ENCODE measurements at regions of chr5 and their contacts with region 1.

Region 1: DNA sequence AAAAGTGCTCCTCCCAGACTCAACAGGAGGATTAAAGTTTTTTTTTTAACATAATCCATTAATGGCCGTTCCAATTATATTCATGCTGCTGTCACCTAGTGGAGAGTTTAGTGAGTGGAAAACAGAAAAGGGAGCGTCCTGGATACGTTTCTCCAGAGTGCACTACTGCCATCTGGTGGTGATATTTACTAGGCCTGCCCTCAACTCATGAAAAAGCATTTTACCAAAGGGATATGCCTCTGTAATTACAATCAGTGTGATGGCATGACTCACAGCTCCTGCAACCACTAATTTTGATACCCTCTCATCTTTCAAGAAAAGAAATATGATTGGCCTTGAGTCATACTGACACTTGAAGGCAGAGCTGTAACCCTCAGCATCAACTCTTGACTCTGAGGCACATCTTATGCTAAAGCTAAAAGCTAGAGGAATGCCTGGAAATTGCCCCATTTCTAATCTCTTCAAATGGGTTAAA is 20.0 kb downstream of the MINAR2 start:
- DNase-seq: peak in 8 of 9 donors; percentile 14 to 60 (median 50)
- ATAC-seq: peak; percentile 86
- H3K4me3 ChIP-seq: no peak overlapping the region
- H3K4me3 Mint-ChIP-seq: no peak overlapping the region
- H3K27ac ChIP-seq: no peak overlapping the region
- H3K27ac Mint-ChIP-seq: no peak overlapping the region
- H3K4me1 ChIP-seq: no peaks in the 10 kb centered on the region
- H3K4me1 Mint-ChIP-seq: peaks cover 0 to 4% (median 0%) of the 10 kb centered on the region in 7 donors
- H3K27me3 ChIP-seq: no peaks in the 10 kb centered on the region
- H3K27me3 Mint-ChIP-seq: no peaks in the 10 kb centered on the region

Region 2: GRCh38 chr5:128905571-128906110 is 862.3 kb before region 1 on chr5:
- CTCF ChIA-PET with region 1: interaction called, 3 read pairs
- POLR2A ChIA-PET with region 1: no interaction called
- intact Hi-C with region 1: loop called in 1 of 2 experiments (anchors 1 kb)
- DNase-seq: peak in 7 of 9 donors; percentile 3 to 47 (median 42)
- ATAC-seq: peak; percentile 76
- H3K4me3 ChIP-seq: no peak overlapping the region
- H3K4me3 Mint-ChIP-seq: no peak overlapping the region
- H3K27ac ChIP-seq: no peak overlapping the region
- H3K27ac Mint-ChIP-seq: no peak overlapping the region
- H3K4me1 ChIP-seq: no peaks in the 10 kb centered on the region
- H3K4me1 Mint-ChIP-seq: no peaks in the 10 kb centered on the region
- H3K27me3 ChIP-seq: no peaks in the 10 kb centered on the region
- H3K27me3 Mint-ChIP-seq: peaks cover 0 to 9% (median 6%) of the 10 kb centered on the region in 5 donors

Region 3: GRCh38 chr5:129094087-129094923 is 673.6 kb before region 1 on chr5 and contains the start of gene ISOC1:
- CTCF ChIA-PET with region 1: no interaction called
- POLR2A ChIA-PET with region 1: no interaction called
- intact Hi-C with region 1: loop called in 1 of 2 experiments (anchors 10 kb)
- DNase-seq: peak; percentile 89 to 95 (median 94)
- ATAC-seq: peak; percentile 96
- H3K4me3 ChIP-seq: peak within 1 kb of the TSS; percentile 72
- H3K4me3 Mint-ChIP-seq: peak within 1 kb of the TSS; percentile 89 to 95 (median 92)
- H3K27ac ChIP-seq: peak within 1 kb of the TSS; percentile 79
- H3K27ac Mint-ChIP-seq: peak within 1 kb of the TSS; percentile 52 to 94 (median 90)
- H3K4me1 ChIP-seq: peaks cover 7 to 8% of the 10 kb centered on the region in 2 donors
- H3K4me1 Mint-ChIP-seq: peaks cover 13 to 47% (median 35%) of the 10 kb centered on the region in 7 donors
- H3K27me3 ChIP-seq: no peaks in the 10 kb centered on the region
- H3K27me3 Mint-ChIP-seq: peaks cover 0 to 24% (median 0%) of the 10 kb centered on the region in 5 donors
- total RNA-seq, gene ISOC1: 5.3 to 18.9 (median 11.9) TPM

Region 4: GRCh38 chr5:129172580-129172979 is 595.4 kb before region 1 on chr5:
- CTCF ChIA-PET with region 1: no interaction called
- POLR2A ChIA-PET with region 1: no interaction called
- intact Hi-C with region 1: loop called in 1 of 2 experiments (anchors 2 kb)
- DNase-seq: no peak
- ATAC-seq: no peak
- H3K4me3 ChIP-seq: no peak overlapping the region
- H3K4me3 Mint-ChIP-seq: no peak overlapping the region
- H3K27ac ChIP-seq: no peak overlapping the region
- H3K27ac Mint-ChIP-seq: no peak overlapping the region
- H3K4me1 ChIP-seq: no peaks in the 10 kb centered on the region
- H3K4me1 Mint-ChIP-seq: no peaks in the 10 kb centered on the region
- H3K27me3 ChIP-seq: no peaks in the 10 kb centered on the region
- H3K27me3 Mint-ChIP-seq: no peaks in the 10 kb centered on the region

Region 5: GRCh38 chr5:129664337-129664937 is 103.5 kb before region 1 on chr5:
- CTCF ChIA-PET with region 1: no interaction called
- POLR2A ChIA-PET with region 1: no interaction called
- intact Hi-C with region 1: loop called (anchors 1 kb)
- DNase-seq: peak in 4 of 9 donors; percentile 2 to 22 (median 6)
- ATAC-seq: no peak
- H3K4me3 ChIP-seq: no peak overlapping the region
- H3K4me3 Mint-ChIP-seq: no peak overlapping the region
- H3K27ac ChIP-seq: no peak overlapping the region
- H3K27ac Mint-ChIP-seq: no peak overlapping the region
- H3K4me1 ChIP-seq: no peaks in the 10 kb centered on the region
- H3K4me1 Mint-ChIP-seq: no peaks in the 10 kb centered on the region
- H3K27me3 ChIP-seq: no peaks in the 10 kb centered on the region
- H3K27me3 Mint-ChIP-seq: peaks cover 0 to 13% (median 0%) of the 10 kb centered on the region in 5 donors

Region 6: DNA sequence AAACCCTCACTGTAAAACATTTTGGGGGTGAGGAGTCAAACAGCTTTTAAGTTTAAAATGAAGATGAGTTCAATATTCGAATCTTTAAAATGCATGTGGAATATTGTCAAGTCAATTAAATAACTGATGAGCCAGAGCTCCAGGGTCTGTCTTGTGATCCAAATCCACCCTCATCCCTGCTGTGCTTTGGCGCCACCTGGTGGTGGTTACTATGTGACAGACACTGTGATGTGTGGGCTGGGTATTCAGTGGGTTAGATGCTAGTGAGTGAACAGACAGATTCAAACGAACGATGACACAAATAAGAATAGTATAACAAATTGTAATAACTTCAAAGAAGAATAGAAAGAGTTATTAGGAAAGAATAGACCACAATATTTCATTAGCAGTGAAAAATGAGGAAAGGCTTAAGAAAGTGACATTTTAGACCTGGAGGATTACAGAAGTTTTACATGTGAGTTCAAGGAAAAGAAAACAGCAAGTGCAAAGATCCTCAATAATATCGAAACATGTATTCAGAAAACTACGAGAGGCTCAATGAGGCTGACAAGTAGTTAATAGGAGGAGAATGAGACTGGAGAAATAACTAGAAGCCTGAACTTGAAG is 84.9 kb after region 1 on chr5:
- CTCF ChIA-PET with region 1: interaction called, 8 read pairs
- POLR2A ChIA-PET with region 1: no interaction called
- intact Hi-C with region 1: loop called (anchors 1 kb)
- DNase-seq: peak; percentile 3 to 71 (median 35)
- ATAC-seq: peak; percentile 76
- H3K4me3 ChIP-seq: no peak overlapping the region
- H3K4me3 Mint-ChIP-seq: no peak overlapping the region
- H3K27ac ChIP-seq: no peak overlapping the region
- H3K27ac Mint-ChIP-seq: no peak overlapping the region
- H3K4me1 ChIP-seq: no peaks in the 10 kb centered on the region
- H3K4me1 Mint-ChIP-seq: no peaks in the 10 kb centered on the region
- H3K27me3 ChIP-seq: no peaks in the 10 kb centered on the region
- H3K27me3 Mint-ChIP-seq: peaks cover 0 to 23% (median 11%) of the 10 kb centered on the region in 5 donors

Region 7: DNA sequence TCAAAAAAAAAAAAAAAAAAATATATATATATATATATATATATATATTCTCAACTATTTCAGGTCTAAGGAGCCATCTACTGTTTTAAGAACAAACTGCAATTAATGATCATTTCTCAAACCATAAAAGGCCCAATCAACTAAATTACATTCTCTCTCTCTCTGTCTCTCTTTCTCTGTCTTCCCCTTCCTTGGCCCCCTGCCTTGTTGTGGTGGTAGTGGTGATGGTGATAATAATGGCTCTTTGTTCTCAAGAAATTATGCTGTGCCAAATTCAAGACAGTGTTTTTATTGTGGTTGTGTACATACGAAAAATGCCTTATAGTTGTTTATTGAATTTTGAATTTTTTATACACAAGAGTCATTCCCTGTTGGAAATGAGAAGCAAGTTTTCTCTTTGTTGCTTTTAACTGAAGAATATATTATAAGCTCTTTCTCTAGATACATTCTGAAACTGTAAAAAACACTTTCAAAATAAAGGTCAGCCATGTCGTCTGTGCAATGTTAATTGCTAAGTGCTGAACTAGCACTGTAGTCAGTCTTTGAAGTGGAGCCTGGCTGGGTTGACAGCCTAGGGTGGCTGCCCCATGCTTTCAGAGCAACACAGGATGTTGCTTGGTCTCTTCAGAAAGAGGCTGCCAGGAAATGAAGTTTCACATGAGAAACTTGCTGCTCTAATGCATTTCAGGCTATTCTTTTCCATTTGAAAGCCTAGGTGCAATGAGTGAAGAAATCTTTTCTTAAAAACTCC is 1301.1 kb after region 1 on chr5:
- CTCF ChIA-PET with region 1: no interaction called
- POLR2A ChIA-PET with region 1: no interaction called
- intact Hi-C with region 1: loop called in 1 of 2 experiments (anchors 2 kb)
- DNase-seq: peak; percentile 8 to 81 (median 67)
- ATAC-seq: peak; percentile 99
- H3K4me3 ChIP-seq: peak overlapping the region; percentile 20
- H3K4me3 Mint-ChIP-seq: peak overlapping the region; percentile 1 to 83 (median 73)
- H3K27ac ChIP-seq: peak overlapping the region; percentile 46
- H3K27ac Mint-ChIP-seq: peak overlapping the region; percentile 83 to 99 (median 92)
- H3K4me1 ChIP-seq: peaks cover 18 to 29% of the 10 kb centered on the region in 2 donors
- H3K4me1 Mint-ChIP-seq: peaks cover 28 to 68% (median 58%) of the 10 kb centered on the region in 7 donors
- H3K27me3 ChIP-seq: no peaks in the 10 kb centered on the region
- H3K27me3 Mint-ChIP-seq: no peaks in the 10 kb centered on the region

Measured in naive thymus-derived CD4-positive, alpha-beta T cell (primary cell).